Caco-2 (cell line): ENCODE measurements at regions of chr7 and their contacts with region 1.

Region 1: GRCh38 chr7:43700059-43700501 is 29.2 kb downstream of the COA1 start:
- DNase-seq: peak in 1 of 2 experiments; percentile 26
- H3K4me3 ChIP-seq: no peak overlapping the region
- H3K4me3 Mint-ChIP-seq: no peak overlapping the region
- H3K27ac Mint-ChIP-seq: no peak overlapping the region
- H3K4me1 ChIP-seq: 0 out of 2 replicates have a peak, but pooled peaks cover under 1% of the 10 kb centered on the region
- H3K4me1 Mint-ChIP-seq: no peaks in the 10 kb centered on the region
- H3K27me3 ChIP-seq: no peaks in the 10 kb centered on the region
- H3K27me3 Mint-ChIP-seq: no peaks in the 10 kb centered on the region
- CTCF ChIP-seq: peak; percentile 56 to 57

Region 2: DNA sequence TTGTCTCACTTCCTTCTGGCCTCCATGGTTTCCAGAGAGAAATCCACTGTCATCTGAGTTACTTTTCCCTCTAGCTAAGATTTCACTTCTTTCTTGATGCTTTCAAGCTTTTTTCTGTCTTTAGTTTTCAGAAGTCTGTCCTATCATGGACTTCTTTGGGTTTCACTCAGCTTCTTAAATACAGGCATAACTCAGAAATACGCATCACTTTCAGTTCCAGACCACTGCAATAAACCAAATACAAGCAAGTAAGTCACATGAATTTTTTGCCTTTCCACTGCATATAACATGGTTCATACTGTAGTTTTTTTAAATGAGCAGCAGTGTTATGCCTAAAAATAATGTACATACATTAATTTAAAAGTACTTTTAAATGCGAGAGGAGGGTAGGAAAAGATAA is 68.5 kb before region 1 on chr7:
- CTCF ChIA-PET with region 1: no interaction called
- POLR2A ChIA-PET with region 1: no interaction called
- intact Hi-C with region 1: no loop called
- DNase-seq: no peak
- H3K4me3 ChIP-seq: no peak overlapping the region
- H3K4me3 Mint-ChIP-seq: no peak overlapping the region
- H3K27ac Mint-ChIP-seq: no peak overlapping the region
- H3K4me1 ChIP-seq: no peaks in the 10 kb centered on the region
- H3K4me1 Mint-ChIP-seq: peaks cover 5% of the 10 kb centered on the region
- H3K27me3 ChIP-seq: no peaks in the 10 kb centered on the region
- H3K27me3 Mint-ChIP-seq: no peaks in the 10 kb centered on the region
- CTCF ChIP-seq: no peak

Region 3: DNA sequence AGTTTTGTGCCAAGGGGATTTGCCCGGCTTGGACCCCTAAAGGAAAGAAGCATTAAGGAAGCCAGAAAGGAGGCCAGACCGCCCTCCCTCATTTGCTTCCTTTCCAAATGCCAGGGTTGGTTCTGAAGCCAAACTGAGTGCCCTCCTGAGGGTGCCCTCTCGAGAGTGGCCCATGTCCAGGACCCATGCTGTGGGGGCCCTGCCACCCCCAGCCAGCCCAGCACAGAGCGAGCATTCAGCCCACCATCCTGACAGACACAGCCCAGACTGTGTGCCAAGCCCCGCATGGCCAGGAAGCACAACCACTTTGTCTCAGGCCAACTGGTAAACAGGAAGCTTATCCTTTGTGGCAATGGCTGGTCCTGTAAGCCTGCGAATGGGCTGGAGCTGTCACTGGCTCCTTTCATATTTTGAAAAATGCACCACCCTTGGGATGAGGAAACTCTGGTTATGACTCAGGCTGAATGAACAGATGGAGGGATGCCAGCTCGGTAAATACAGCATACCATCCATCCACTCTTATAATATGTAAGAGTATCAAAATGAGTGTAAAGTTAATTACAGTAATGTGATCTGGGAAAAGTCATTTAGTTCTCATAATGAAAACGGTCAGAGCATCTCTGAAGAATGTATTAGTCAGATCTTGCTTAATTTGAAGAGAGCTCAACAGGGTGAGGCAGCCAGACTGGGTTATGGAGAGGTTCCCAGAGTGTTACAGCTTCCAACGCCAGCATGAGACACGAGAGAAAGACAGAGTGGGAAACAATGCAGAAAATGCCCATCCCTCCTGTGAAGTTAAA is 52.2 kb before region 1 on chr7:
- CTCF ChIA-PET with region 1: interaction called, 7 read pairs
- POLR2A ChIA-PET with region 1: no interaction called
- intact Hi-C with region 1: loop called (anchors 1 kb)
- DNase-seq: no peak
- H3K4me3 ChIP-seq: no peak overlapping the region
- H3K4me3 Mint-ChIP-seq: no peak overlapping the region
- H3K27ac Mint-ChIP-seq: no peak overlapping the region
- H3K4me1 ChIP-seq: no peaks in the 10 kb centered on the region
- H3K4me1 Mint-ChIP-seq: no peaks in the 10 kb centered on the region
- H3K27me3 ChIP-seq: no peaks in the 10 kb centered on the region
- H3K27me3 Mint-ChIP-seq: no peaks in the 10 kb centered on the region
- CTCF ChIP-seq: no peak